Endothelial cell of umbilical vein (primary cell): ENCODE measurements at regions of chr11 and their contacts with region 1.

Region 1: GRCh38 chr11:17730608-17731462 is 3.7 kb upstream of the KCNC1 start:
- DNase-seq: peak; percentile 78
- H3K4me3 ChIP-seq: no peak overlapping the region
- H3K27ac ChIP-seq: no peak overlapping the region
- H3K4me1 ChIP-seq: peaks cover 7% of the 10 kb centered on the region
- H3K27me3 ChIP-seq: peaks cover 22 to 30% of the 10 kb centered on the region in 2 experiments
- CTCF ChIP-seq: peak; percentile 69 to 91
- POLR2A ChIP-seq: no peak

Region 2: DNA sequence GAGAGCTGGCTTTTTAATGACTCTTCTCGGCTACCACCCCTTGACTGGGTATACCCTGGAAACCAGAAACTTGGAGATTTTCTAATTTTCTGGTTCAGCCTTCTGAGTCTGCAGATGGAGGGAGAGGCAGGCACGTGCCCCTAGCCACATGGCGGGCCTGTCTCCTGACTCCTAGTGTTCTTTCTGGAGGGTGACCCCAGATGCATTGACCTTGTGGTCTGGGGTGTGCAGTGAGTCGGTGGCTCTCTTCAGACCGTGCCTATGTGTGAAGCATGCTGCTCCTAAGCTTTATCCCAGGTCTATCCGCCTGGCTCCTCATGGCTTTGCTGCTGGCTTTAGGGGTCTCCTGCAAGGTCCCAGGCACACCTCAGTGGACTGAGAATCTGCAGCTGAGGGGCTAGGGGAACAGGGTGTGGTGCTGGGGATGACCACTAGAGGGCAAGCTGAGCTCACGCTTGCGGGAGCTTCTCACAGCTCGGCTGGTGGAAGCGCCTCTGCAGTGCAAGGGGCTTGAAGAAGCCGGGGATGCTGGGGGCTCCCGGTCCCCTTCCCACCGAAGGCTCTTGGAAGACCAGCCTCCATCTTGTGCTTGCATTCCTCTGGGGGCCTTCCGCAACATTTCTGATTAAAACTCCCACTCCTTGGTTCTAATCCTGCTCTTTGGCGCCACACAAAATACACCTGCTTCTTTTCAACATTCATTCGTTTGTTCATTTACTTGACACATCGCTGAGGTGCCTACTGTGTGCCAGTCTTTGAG is 132.0 kb before region 1 on chr11:
- CTCF ChIA-PET with region 1: interaction called, 79 read pairs
- POLR2A ChIA-PET with region 1: no interaction called
- dilution Hi-C with region 1: no loop called
- intact Hi-C with region 1: loop called (anchors 1 kb)
- DNase-seq: peak; percentile 61
- H3K4me3 ChIP-seq: no peak overlapping the region
- H3K27ac ChIP-seq: no peak overlapping the region
- H3K4me1 ChIP-seq: no peaks in the 10 kb centered on the region
- H3K27me3 ChIP-seq: no peaks in the 10 kb centered on the region
- CTCF ChIP-seq: peak; percentile 86 to 98
- POLR2A ChIP-seq: no peak

Region 3: DNA sequence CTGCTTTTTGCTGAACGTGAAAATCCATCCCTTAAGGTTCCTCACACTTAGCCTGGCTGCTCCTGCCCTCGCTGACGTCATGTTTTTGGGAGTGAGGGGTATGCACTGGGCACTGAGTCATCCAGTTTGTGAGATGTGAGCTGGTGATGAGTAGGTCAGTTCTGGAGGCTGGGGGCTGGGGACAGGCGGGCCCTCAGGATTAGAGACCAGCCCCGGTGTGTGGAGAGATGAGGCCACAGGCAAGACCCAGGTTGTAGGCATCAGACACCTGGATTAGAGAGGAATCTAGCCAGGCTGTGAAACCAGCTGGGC is 12.9 kb after region 1 on chr11:
- CTCF ChIA-PET with region 1: interaction called, 14 read pairs
- POLR2A ChIA-PET with region 1: no interaction called
- dilution Hi-C with region 1: no loop called
- intact Hi-C with region 1: no loop called
- DNase-seq: no peak
- H3K4me3 ChIP-seq: no peak overlapping the region
- H3K27ac ChIP-seq: no peak overlapping the region
- H3K4me1 ChIP-seq: no peaks in the 10 kb centered on the region
- H3K27me3 ChIP-seq: peaks cover 8 to 12% of the 10 kb centered on the region in 2 experiments
- CTCF ChIP-seq: no peak
- POLR2A ChIP-seq: no peak

Region 4: DNA sequence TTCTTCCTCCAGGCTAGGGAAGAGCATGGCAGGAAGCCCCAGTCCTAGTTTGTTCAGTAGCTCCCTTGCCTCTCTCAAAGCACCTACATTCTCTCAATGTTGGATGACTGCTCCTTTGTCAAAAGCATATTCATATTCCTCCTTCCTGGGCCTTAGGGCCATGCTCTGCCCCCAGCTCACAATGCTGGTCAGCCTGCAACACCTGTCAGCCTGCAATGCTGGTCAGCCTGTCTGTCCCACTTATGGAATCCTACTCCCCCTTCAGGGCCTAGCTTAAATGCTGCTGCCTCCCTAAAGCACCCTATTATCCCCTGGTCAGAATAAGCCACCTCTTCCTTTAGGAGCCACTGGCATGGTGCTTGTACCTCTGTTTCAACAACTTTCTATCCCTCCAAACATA is 236.8 kb after region 1 on chr11:
- CTCF ChIA-PET with region 1: interaction called, 593 read pairs
- POLR2A ChIA-PET with region 1: no interaction called
- dilution Hi-C with region 1: no loop called
- intact Hi-C with region 1: no loop called
- DNase-seq: no peak
- H3K4me3 ChIP-seq: no peak overlapping the region
- H3K27ac ChIP-seq: no peak overlapping the region
- H3K4me1 ChIP-seq: no peaks in the 10 kb centered on the region
- H3K27me3 ChIP-seq: no peaks in the 10 kb centered on the region
- CTCF ChIP-seq: no peak
- POLR2A ChIP-seq: no peak

Region 5: GRCh38 chr11:17978553-17979287 is 247.9 kb after region 1 on chr11:
- CTCF ChIA-PET with region 1: interaction called, 593 read pairs
- POLR2A ChIA-PET with region 1: interaction called, 3 read pairs
- dilution Hi-C with region 1: no loop called
- intact Hi-C with region 1: loop called (anchors 1 kb)
- DNase-seq: peak; percentile 41
- H3K4me3 ChIP-seq: no peak overlapping the region
- H3K27ac ChIP-seq: no peak overlapping the region
- H3K4me1 ChIP-seq: no peaks in the 10 kb centered on the region
- H3K27me3 ChIP-seq: no peaks in the 10 kb centered on the region
- CTCF ChIP-seq: peak; percentile 64 to 87
- POLR2A ChIP-seq: no peak

Region 6: DNA sequence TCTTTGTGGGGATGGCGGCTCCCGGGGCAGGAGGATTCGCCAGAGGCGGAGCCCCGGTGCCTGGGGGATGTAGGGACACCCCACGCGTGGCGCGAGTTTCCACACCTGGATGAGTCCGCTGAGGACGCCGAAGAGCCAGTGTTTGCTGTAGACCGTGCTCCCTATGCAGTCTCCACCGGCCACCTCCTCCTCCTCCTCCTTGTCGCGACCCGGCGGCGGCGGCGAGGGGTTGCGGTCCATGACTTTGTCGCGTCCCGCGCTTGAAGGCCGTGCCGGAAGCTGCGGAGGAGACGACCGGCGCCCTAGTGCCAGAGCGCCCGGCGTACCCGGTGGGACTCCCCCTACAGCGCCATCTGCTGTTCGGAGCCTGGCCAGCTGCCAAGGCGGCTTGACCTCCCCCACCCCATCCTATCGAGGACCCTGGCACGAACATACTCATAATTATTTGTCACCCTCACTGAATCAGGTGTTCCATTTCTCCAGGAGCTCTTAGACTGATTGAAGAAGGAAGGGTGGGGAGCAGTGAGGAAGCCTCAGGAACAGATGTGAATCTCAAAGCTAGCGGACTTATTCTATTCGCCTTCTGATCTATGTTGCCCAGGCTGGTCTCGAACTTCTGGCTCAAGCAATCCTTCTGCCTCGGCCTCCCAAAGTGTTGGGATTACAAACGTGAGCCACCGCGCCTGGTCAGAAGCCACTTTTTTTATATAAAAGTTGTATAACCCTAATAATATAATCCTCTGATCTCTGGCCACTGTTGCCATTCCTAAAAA is 375.2 kb after region 1 on chr11 and contains the start of gene SAAL1:
- CTCF ChIA-PET with region 1: interaction called, 4 read pairs
- POLR2A ChIA-PET with region 1: no interaction called
- dilution Hi-C with region 1: no loop called
- intact Hi-C with region 1: loop called (anchors 10 kb)
- DNase-seq: peak; percentile 81
- H3K4me3 ChIP-seq: peak within 1 kb of the TSS; percentile 50 to 94 (median 92)
- H3K27ac ChIP-seq: peak within 1 kb of the TSS; percentile 14
- H3K4me1 ChIP-seq: peaks cover 7% of the 10 kb centered on the region
- H3K27me3 ChIP-seq: peaks cover 2 to 11% of the 10 kb centered on the region in 2 experiments
- CTCF ChIP-seq: peak; percentile 76 to 85
- POLR2A ChIP-seq: peak; percentile 61
- total RNA-seq, gene SAAL1: 22.1 and 24.2 TPM in 2 replicates